ENCODE measurements at regions of chr3 and their contacts with region 1.

Region 1: GRCh38 chr3:39288300-39288808 is 8.5 kb upstream of the CX3CR1 start:
- DNase-seq: peak; percentile 94
- ATAC-seq: peak; percentile 99
- H3K4me3 ChIP-seq: no peak overlapping the region
- H3K4me3 Mint-ChIP-seq: no peak overlapping the region
- H3K27ac ChIP-seq: no peak overlapping the region
- H3K27ac Mint-ChIP-seq: peak overlapping the region; percentile 67
- H3K4me1 ChIP-seq: peaks cover 13 to 27% of the 10 kb centered on the region in 2 donors
- H3K4me1 Mint-ChIP-seq: peaks cover 39% of the 10 kb centered on the region
- H3K27me3 ChIP-seq: no peaks in the 10 kb centered on the region
- H3K27me3 Mint-ChIP-seq: no peaks in the 10 kb centered on the region
- CTCF ChIP-seq: peak; percentile 96

Region 2: GRCh38 chr3:39051647-39052561 is 236.4 kb before region 1 on chr3 and contains the starts of genes SCN11A and WDR48:
- CTCF ChIA-PET with region 1: interaction called, 3 read pairs
- POLR2A ChIA-PET with region 1: no interaction called
- intact Hi-C with region 1: loop called (anchors 1 kb)
- DNase-seq: peak; percentile 94
- ATAC-seq: peak; percentile 94
- H3K4me3 ChIP-seq: peak within 1 kb of the TSS; percentile 72 to 93 (median 87)
- H3K4me3 Mint-ChIP-seq: peak within 1 kb of the TSS; percentile 97
- H3K27ac ChIP-seq: peak within 1 kb of the TSS; percentile 87 to 98
- H3K27ac Mint-ChIP-seq: peak within 1 kb of the TSS; percentile 98
- H3K4me1 ChIP-seq: peaks cover 11 to 15% of the 10 kb centered on the region in 2 donors
- H3K4me1 Mint-ChIP-seq: peaks cover 44% of the 10 kb centered on the region
- H3K27me3 ChIP-seq: no peaks in the 10 kb centered on the region
- H3K27me3 Mint-ChIP-seq: no peaks in the 10 kb centered on the region
- CTCF ChIP-seq: no peak
- total RNA-seq, gene SCN11A: 0.24 and 0.25 TPM in 2 replicates
- total RNA-seq, gene WDR48: 67.6 and 68.6 TPM in 2 replicates

Region 3: GRCh38 chr3:39107388-39108199 is 180.8 kb before region 1 on chr3 and contains the starts of genes GORASP1 and TTC21A:
- CTCF ChIA-PET with region 1: interaction called, 44 read pairs
- POLR2A ChIA-PET with region 1: interaction called, 3 read pairs
- intact Hi-C with region 1: loop called (anchors 2 kb)
- DNase-seq: peak; percentile 80
- ATAC-seq: peak; percentile 48
- H3K4me3 ChIP-seq: peak within 1 kb of the TSS; percentile 63 to 99 (median 96)
- H3K4me3 Mint-ChIP-seq: peak within 1 kb of the TSS; percentile 93
- H3K27ac ChIP-seq: peak within 1 kb of the TSS; percentile 63 to 88
- H3K27ac Mint-ChIP-seq: peak within 1 kb of the TSS; percentile 90
- H3K4me1 ChIP-seq: peaks cover 41 to 54% of the 10 kb centered on the region in 2 donors
- H3K4me1 Mint-ChIP-seq: peaks cover 62% of the 10 kb centered on the region
- H3K27me3 ChIP-seq: no peaks in the 10 kb centered on the region
- H3K27me3 Mint-ChIP-seq: no peaks in the 10 kb centered on the region
- CTCF ChIP-seq: no peak
- total RNA-seq, gene GORASP1: 84.0 and 97.5 TPM in 2 replicates
- total RNA-seq, gene TTC21A: 106 and 116 TPM in 2 replicates

Region 4: DNA sequence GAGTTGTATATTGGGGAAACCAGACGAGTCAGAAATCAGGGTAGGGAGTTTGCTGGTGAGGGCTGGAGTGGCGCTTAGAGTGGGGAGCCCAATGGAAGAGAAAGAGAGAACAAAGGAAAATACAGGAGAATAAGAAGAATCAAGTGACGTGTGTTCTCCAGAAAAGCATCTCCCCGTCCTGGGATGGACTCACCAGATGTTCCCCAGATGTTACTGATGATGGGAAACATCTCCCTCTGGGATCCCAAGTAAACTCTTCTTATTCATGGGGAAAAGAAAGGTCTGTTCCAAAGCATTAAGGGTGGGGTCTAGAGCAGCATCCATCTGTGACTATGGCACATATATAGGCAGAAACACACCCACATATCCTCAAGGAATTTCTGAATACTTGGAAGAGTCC is 131.9 kb before region 1 on chr3:
- CTCF ChIA-PET with region 1: interaction called, 14 read pairs
- POLR2A ChIA-PET with region 1: no interaction called
- intact Hi-C with region 1: no loop called
- DNase-seq: no peak
- ATAC-seq: no peak
- H3K4me3 ChIP-seq: no peak overlapping the region
- H3K4me3 Mint-ChIP-seq: no peak overlapping the region
- H3K27ac ChIP-seq: no peak overlapping the region
- H3K27ac Mint-ChIP-seq: no peak overlapping the region
- H3K4me1 ChIP-seq: peaks cover 9 to 20% of the 10 kb centered on the region in 2 donors
- H3K4me1 Mint-ChIP-seq: peaks cover 15% of the 10 kb centered on the region
- H3K27me3 ChIP-seq: no peaks in the 10 kb centered on the region
- H3K27me3 Mint-ChIP-seq: no peaks in the 10 kb centered on the region
- CTCF ChIP-seq: no peak

Region 5: GRCh38 chr3:39208463-39209055 is 79.8 kb before region 1 on chr3:
- CTCF ChIA-PET with region 1: interaction called, 1,573 read pairs
- POLR2A ChIA-PET with region 1: no interaction called
- intact Hi-C with region 1: loop called (anchors 1 kb)
- DNase-seq: peak; percentile 69
- ATAC-seq: peak; percentile 70
- H3K4me3 ChIP-seq: no peak overlapping the region
- H3K4me3 Mint-ChIP-seq: no peak overlapping the region
- H3K27ac ChIP-seq: no peak overlapping the region
- H3K27ac Mint-ChIP-seq: no peak overlapping the region
- H3K4me1 ChIP-seq: peaks cover 3 to 7% of the 10 kb centered on the region in 2 donors
- H3K4me1 Mint-ChIP-seq: peaks cover 9% of the 10 kb centered on the region
- H3K27me3 ChIP-seq: peaks cover 0 to 12% (median 6%) of the 10 kb centered on the region in 4 experiments
- H3K27me3 Mint-ChIP-seq: peaks cover 8% of the 10 kb centered on the region
- CTCF ChIP-seq: peak; percentile 62

Region 6: GRCh38 chr3:39255503-39256325 is 32.6 kb before region 1 on chr3:
- CTCF ChIA-PET with region 1: interaction called, 90 read pairs
- POLR2A ChIA-PET with region 1: interaction called, 7 read pairs
- intact Hi-C with region 1: loop called (anchors 1 kb)
- DNase-seq: peak; percentile 90
- ATAC-seq: peak; percentile 97
- H3K4me3 ChIP-seq: peak overlapping the region in 2 of 5 experiments; percentile 21 to 35
- H3K4me3 Mint-ChIP-seq: peak overlapping the region; percentile 81
- H3K27ac ChIP-seq: peak overlapping the region; percentile 77 to 79
- H3K27ac Mint-ChIP-seq: peak overlapping the region; percentile 97
- H3K4me1 ChIP-seq: peaks cover 79 to 82% of the 10 kb centered on the region in 2 donors
- H3K4me1 Mint-ChIP-seq: peaks cover 82% of the 10 kb centered on the region
- H3K27me3 ChIP-seq: peaks cover 0 to 3% (median 0%) of the 10 kb centered on the region in 4 experiments
- H3K27me3 Mint-ChIP-seq: peaks cover 4% of the 10 kb centered on the region
- CTCF ChIP-seq: no peak

Region 7: DNA sequence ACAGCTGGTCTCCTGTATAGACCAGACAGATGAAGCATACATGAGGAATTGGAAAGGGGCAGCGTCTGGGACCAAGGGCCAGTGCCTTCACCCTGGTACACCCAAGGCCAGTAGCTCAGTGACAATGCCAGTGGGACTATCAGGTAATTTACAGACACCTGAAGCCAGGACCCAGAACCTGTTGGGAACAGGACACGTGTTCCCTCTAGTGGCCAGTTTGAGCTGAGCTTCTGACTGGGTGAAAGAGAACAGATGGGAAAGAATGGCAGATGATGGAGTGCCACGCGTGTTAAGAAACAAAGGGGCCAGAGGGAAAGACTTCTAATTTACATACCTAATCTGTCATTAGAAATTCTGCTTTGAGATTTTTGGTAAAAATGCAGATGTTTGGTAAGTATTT is 89.7 kb after region 1 on chr3:
- CTCF ChIA-PET with region 1: interaction called, 17 read pairs
- POLR2A ChIA-PET with region 1: no interaction called
- intact Hi-C with region 1: loop called (anchors 2 kb)
- DNase-seq: peak; percentile 63
- ATAC-seq: peak; percentile 60
- H3K4me3 ChIP-seq: no peak overlapping the region
- H3K4me3 Mint-ChIP-seq: no peak overlapping the region
- H3K27ac ChIP-seq: no peak overlapping the region
- H3K27ac Mint-ChIP-seq: no peak overlapping the region
- H3K4me1 ChIP-seq: peaks cover 6 to 7% of the 10 kb centered on the region in 2 donors
- H3K4me1 Mint-ChIP-seq: peaks cover 12% of the 10 kb centered on the region
- H3K27me3 ChIP-seq: peaks cover 0 to 2% (median 0%) of the 10 kb centered on the region in 4 experiments
- H3K27me3 Mint-ChIP-seq: no peaks in the 10 kb centered on the region
- CTCF ChIP-seq: peak; percentile 78

Region 8: GRCh38 chr3:39473452-39474127 is 185.2 kb after region 1 on chr3:
- CTCF ChIA-PET with region 1: no interaction called
- POLR2A ChIA-PET with region 1: no interaction called
- intact Hi-C with region 1: no loop called
- DNase-seq: no peak
- ATAC-seq: no peak
- H3K4me3 ChIP-seq: no peak overlapping the region
- H3K4me3 Mint-ChIP-seq: no peak overlapping the region
- H3K27ac ChIP-seq: no peak overlapping the region
- H3K27ac Mint-ChIP-seq: no peak overlapping the region
- H3K4me1 ChIP-seq: no peaks in the 10 kb centered on the region
- H3K4me1 Mint-ChIP-seq: no peaks in the 10 kb centered on the region
- H3K27me3 ChIP-seq: no peaks in the 10 kb centered on the region
- H3K27me3 Mint-ChIP-seq: peaks cover 18% of the 10 kb centered on the region
- CTCF ChIP-seq: no peak

Measured in B cell (primary cell).